Motor neuron (in vitro differentiated cells): ENCODE measurements at regions of chr10 and their contacts with region 1.

Region 1: GRCh38 chr10:17430647-17431355 is 23.6 kb downstream of the ST8SIA6 start:
- ATAC-seq: peak; percentile 68 to 98 (median 86)
- H3K4me3 ChIP-seq: no peak overlapping the region
- H3K27ac ChIP-seq: no peak overlapping the region
- H3K4me1 ChIP-seq: no peaks in the 10 kb centered on the region

Region 2: GRCh38 chr10:16828114-16828568 is 602.7 kb before region 1 on chr10:
- in situ Hi-C with region 1: loop called (anchors 25 kb)
- ATAC-seq: peak; percentile 60 to 83 (median 67)
- H3K4me3 ChIP-seq: no peak overlapping the region
- H3K27ac ChIP-seq: no peak overlapping the region
- H3K4me1 ChIP-seq: no peaks in the 10 kb centered on the region

Region 3: GRCh38 chr10:17228091-17228940 is 202.5 kb before region 1 on chr10 and contains the start of gene VIM:
- in situ Hi-C with region 1: no loop called
- ATAC-seq: peak; percentile 57 to 75 (median 68)
- H3K4me3 ChIP-seq: peak within 1 kb of the TSS; percentile 56 to 96 (median 79)
- H3K27ac ChIP-seq: peak within 1 kb of the TSS; percentile 88 to 95
- H3K4me1 ChIP-seq: peaks cover 8 to 16% of the 10 kb centered on the region in 2 donors
- total RNA-seq, gene VIM: 509 to 5,662 (median 997) TPM

Region 4: DNA sequence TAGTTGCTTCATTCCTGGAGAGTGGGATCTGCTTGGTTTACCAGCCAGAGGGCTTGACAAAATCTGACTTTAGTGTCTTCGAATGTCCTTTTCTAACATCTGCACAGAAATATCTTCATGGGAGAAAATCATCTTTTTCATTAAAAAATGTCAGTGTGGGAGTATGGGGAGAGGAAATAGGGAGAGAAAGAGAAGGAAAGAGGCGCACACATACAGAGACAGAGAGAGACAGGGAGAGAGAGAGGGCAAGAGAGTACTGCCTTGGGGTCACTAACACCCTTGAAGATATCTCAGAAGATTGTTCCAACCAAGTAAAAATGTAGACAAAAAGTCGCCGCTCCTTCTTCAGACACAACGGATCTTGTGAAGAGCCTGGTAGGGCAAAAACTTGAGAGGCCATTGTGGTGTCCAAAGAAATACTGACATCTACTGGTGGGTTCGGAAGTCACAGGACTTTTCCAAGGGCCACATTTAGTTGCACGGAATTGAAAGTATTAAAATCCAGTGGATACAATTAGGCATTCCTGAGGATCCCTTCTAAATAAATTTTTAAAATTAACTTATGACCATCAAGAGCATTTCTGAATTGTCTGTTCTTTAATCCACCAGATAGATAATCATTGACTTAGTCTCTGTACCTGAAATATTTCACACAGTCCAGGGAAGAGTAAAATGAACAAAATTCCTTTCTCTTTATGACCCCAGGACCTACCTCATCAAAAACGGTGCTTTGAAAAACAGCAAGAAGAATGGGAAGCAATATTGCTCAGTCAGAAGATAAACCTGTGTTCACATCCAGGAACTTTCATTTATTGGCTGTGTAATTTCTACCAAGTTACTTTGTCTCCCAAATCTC is 173.1 kb before region 1 on chr10:
- in situ Hi-C with region 1: loop called in 1 of 9 experiments (anchors 25 kb)
- ATAC-seq: peak; percentile 30 to 96 (median 70)
- H3K4me3 ChIP-seq: no peak overlapping the region
- H3K27ac ChIP-seq: no peak overlapping the region
- H3K4me1 ChIP-seq: peaks cover 0 to 5% of the 10 kb centered on the region in 2 donors

Region 5: GRCh38 chr10:17290226-17290625 is 140.6 kb before region 1 on chr10:
- in situ Hi-C with region 1: loop called in 2 of 9 experiments (anchors 10 to 25 kb)
- ATAC-seq: peak in 5 of 8 experiments; percentile 29 to 92 (median 82)
- H3K4me3 ChIP-seq: no peak overlapping the region
- H3K27ac ChIP-seq: no peak overlapping the region
- H3K4me1 ChIP-seq: peaks cover 0 to 4% of the 10 kb centered on the region in 2 donors